Mammary epithelial cell (primary cell): ENCODE measurements at regions of chr7 and their contacts with region 1.

Region 1: DNA sequence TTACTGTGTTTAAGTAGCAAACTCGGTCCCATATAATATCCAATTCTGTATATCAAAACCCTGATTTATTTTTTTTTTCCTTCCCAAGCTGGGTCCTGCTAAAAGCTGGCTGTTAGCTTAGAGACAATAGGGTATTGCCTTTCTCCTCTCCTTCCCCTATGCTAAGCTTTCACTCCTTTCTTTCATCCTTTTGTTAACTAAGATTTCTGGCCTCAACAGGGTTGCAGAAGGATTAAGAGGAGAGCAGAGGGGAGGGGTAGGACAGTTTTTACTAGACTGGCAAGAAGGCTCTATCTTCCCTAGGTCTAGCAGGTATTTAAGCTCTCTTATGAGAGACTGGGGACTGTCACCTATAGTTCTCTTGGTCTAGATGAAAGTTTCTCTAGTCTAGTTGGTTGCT is 229.2 kb downstream of the KCND2 start:
- DNase-seq: no peak
- H3K4me3 ChIP-seq: no peak overlapping the region
- H3K27ac ChIP-seq: no peak overlapping the region
- H3K4me1 ChIP-seq: no peaks in the 10 kb centered on the region
- H3K27me3 ChIP-seq: no peaks in the 10 kb centered on the region
- CTCF ChIP-seq: no peak

Region 2: DNA sequence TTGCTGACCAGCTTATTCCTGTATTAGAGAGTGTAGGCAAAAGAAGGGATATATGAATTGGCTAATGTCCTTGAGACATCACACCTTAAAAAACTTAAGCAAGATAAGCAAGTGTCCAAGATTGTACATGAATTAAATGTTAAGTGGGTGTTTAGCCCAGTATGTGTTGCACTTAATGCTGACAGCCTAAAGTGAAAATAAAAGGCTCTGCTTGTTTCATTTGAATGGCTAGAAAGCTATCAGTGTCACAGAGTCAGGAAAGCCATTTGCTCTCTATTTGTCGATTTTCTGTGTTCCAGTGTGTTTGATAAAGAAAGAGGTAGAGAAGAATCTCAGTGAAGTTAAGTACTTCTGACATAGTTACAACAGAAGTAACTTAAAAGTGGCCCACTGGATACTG is 1532.8 kb before region 1 on chr7:
- CTCF ChIA-PET with region 1: no interaction called
- dilution Hi-C with region 1: no loop called
- in situ Hi-C with region 1: no loop called
- intact Hi-C with region 1: loop called (anchors 5 kb)
- DNase-seq: no peak
- H3K4me3 ChIP-seq: no peak overlapping the region
- H3K27ac ChIP-seq: no peak overlapping the region
- H3K4me1 ChIP-seq: no peaks in the 10 kb centered on the region
- H3K27me3 ChIP-seq: peaks cover 4% of the 10 kb centered on the region
- CTCF ChIP-seq: no peak